Naive thymus-derived CD4-positive, alpha-beta T cell (primary cell): ENCODE measurements at regions of chr21 and their contacts with region 1.

Region 1: GRCh38 chr21:37366482-37367316 is at the start of gene DYRK1A:
- DNase-seq: peak; percentile 95 to 99 (median 99)
- ATAC-seq: peak; percentile 91
- H3K4me3 ChIP-seq: peak within 1 kb of the TSS; percentile 75
- H3K4me3 Mint-ChIP-seq: peak within 1 kb of the TSS; percentile 93 to 100 (median 100)
- H3K27ac ChIP-seq: peak within 1 kb of the TSS; percentile 99
- H3K27ac Mint-ChIP-seq: peak within 1 kb of the TSS; percentile 98 to 100 (median 100)
- H3K4me1 ChIP-seq: peaks cover 20 to 33% of the 10 kb centered on the region in 2 donors
- H3K4me1 Mint-ChIP-seq: peaks cover 34 to 53% (median 44%) of the 10 kb centered on the region in 7 donors
- H3K27me3 ChIP-seq: no peaks in the 10 kb centered on the region
- H3K27me3 Mint-ChIP-seq: peaks cover 0 to 5% (median 0%) of the 10 kb centered on the region in 5 donors
- total RNA-seq, gene DYRK1A: 86.0 to 142 (median 125) TPM

Region 2: GRCh38 chr21:36297921-36298594 is 1068.6 kb before region 1 on chr21:
- CTCF ChIA-PET with region 1: no interaction called
- POLR2A ChIA-PET with region 1: no interaction called
- intact Hi-C with region 1: loop called in 1 of 2 experiments (anchors 10 kb)
- DNase-seq: peak; percentile 35 to 89 (median 87)
- ATAC-seq: peak; percentile 99
- H3K4me3 ChIP-seq: peak overlapping the region; percentile 52
- H3K4me3 Mint-ChIP-seq: peak overlapping the region; percentile 71 to 88 (median 84)
- H3K27ac ChIP-seq: peak overlapping the region; percentile 84
- H3K27ac Mint-ChIP-seq: peak overlapping the region; percentile 91 to 100 (median 98)
- H3K4me1 ChIP-seq: peaks cover 21 to 36% of the 10 kb centered on the region in 2 donors
- H3K4me1 Mint-ChIP-seq: peaks cover 24 to 53% (median 40%) of the 10 kb centered on the region in 7 donors
- H3K27me3 ChIP-seq: no peaks in the 10 kb centered on the region
- H3K27me3 Mint-ChIP-seq: no peaks in the 10 kb centered on the region

Region 3: DNA sequence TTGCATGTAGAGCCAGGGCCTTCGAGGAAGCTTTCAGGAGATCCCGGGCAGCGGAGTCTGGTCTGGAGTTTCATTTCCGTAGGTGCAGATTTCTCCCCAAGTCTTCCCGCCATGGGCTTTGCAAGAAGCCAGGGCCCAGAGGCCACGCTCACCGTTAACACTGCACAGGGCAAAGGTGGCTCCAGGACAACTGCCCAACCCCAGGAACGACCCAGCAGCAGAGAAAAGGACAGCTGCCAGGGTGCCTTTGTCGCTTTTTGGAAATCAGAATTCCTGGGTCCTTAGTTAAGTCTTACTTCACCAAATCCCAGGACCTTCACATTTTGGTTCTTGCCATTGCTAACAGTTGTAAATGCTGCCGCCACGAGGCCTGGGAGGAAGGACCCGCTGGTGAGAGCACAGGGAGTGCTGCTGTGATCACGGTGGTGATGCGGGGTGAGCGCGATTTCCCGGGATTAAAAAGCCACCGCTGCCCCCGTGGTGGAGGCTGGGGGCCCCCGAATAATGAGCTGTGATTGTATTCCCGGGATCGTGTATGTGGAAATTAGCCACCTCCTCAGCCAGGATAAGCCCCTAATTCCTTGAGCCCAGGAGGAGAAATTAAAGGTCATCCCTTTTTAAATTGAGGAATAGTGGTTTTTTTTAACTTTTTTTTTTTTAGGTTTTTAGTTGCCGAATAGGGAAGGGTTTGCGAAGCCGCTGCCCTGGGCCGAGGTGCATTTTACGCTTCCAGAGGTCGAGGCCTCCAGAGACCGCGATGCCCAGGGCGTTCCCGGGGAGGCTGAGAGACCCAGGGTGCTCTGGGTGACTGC is 659.5 kb before region 1 on chr21:
- CTCF ChIA-PET with region 1: no interaction called
- POLR2A ChIA-PET with region 1: no interaction called
- intact Hi-C with region 1: no loop called
- DNase-seq: peak in 1 of 9 donors; percentile 18
- ATAC-seq: no peak
- H3K4me3 ChIP-seq: no peak overlapping the region
- H3K4me3 Mint-ChIP-seq: peak overlapping the region in 9 of 10 donors; percentile 51 to 84 (median 72)
- H3K27ac ChIP-seq: no peak overlapping the region
- H3K27ac Mint-ChIP-seq: no peak overlapping the region
- H3K4me1 ChIP-seq: peaks cover 0 to 31% of the 10 kb centered on the region in 2 donors
- H3K4me1 Mint-ChIP-seq: peaks cover 8 to 61% (median 51%) of the 10 kb centered on the region in 7 donors
- H3K27me3 ChIP-seq: peaks cover 0 to 36% of the 10 kb centered on the region in 2 donors
- H3K27me3 Mint-ChIP-seq: peaks cover 71 to 84% (median 80%) of the 10 kb centered on the region in 5 donors

Region 4: DNA sequence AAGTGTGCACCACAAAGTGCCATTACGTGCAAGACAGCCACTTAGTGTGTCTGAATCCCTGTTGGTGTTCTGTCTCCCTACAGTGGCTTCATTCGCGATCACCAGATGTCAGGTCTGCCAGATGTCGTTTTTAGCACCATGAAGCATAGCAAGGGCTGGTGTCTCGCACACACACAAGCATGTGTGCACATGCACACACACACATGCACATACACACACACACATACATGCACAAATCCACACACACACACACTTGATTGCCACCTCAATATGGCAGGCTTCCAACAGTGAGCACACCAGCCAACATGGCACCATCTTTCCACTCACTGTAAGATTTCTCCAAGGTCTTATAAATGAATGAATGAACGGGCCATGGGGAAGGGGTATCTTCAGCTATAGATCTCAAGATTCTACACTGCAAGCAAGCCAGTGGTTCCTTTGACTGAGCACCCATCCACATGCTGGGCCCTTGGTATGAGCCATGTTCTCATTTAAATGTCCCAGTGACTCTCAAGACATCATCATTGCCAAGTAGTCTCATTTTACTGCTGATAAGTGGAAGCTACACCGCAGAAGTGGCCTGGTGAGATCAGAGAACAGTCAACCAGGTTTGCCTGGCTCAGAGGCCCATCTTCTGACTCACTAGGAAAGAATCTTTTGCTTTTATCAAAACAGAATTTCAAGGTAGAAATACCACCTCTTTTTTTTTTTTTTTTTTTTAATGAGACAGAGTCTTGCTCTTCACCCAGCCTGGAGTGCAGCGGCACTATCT is 582.9 kb before region 1 on chr21:
- CTCF ChIA-PET with region 1: no interaction called
- POLR2A ChIA-PET with region 1: no interaction called
- intact Hi-C with region 1: no loop called
- DNase-seq: no peak
- ATAC-seq: no peak
- H3K4me3 ChIP-seq: no peak overlapping the region
- H3K4me3 Mint-ChIP-seq: no peak overlapping the region
- H3K27ac ChIP-seq: no peak overlapping the region
- H3K27ac Mint-ChIP-seq: no peak overlapping the region
- H3K4me1 ChIP-seq: no peaks in the 10 kb centered on the region
- H3K4me1 Mint-ChIP-seq: peaks cover 0 to 7% (median 0%) of the 10 kb centered on the region in 7 donors
- H3K27me3 ChIP-seq: no peaks in the 10 kb centered on the region
- H3K27me3 Mint-ChIP-seq: no peaks in the 10 kb centered on the region

Region 5: GRCh38 chr21:37072988-37073416 is 293.7 kb before region 1 on chr21 and contains the starts of genes PIGP and TTC3:
- CTCF ChIA-PET with region 1: no interaction called
- POLR2A ChIA-PET with region 1: no interaction called
- intact Hi-C with region 1: loop called (anchors 1 kb)
- DNase-seq: peak; percentile 93 to 99 (median 97)
- ATAC-seq: peak; percentile 79
- H3K4me3 ChIP-seq: peak within 1 kb of the TSS; percentile 76
- H3K4me3 Mint-ChIP-seq: peak within 1 kb of the TSS; percentile 88 to 100 (median 98)
- H3K27ac ChIP-seq: peak within 1 kb of the TSS; percentile 97
- H3K27ac Mint-ChIP-seq: peak within 1 kb of the TSS; percentile 91 to 100 (median 97)
- H3K4me1 ChIP-seq: peaks cover 22 to 23% of the 10 kb centered on the region in 2 donors
- H3K4me1 Mint-ChIP-seq: peaks cover 30 to 66% (median 59%) of the 10 kb centered on the region in 7 donors
- H3K27me3 ChIP-seq: no peaks in the 10 kb centered on the region
- H3K27me3 Mint-ChIP-seq: peaks cover 0 to 6% (median 0%) of the 10 kb centered on the region in 5 donors
- total RNA-seq, gene PIGP: 9.1 to 26.7 (median 15.3) TPM
- total RNA-seq, gene TTC3: 66.6 to 208 (median 154) TPM

Region 6: GRCh38 chr21:37257967-37258877 is 108.5 kb before region 1 on chr21:
- CTCF ChIA-PET with region 1: no interaction called
- POLR2A ChIA-PET with region 1: interaction called, 4 read pairs
- intact Hi-C with region 1: loop called in 1 of 2 experiments (anchors 2 kb)
- DNase-seq: peak; percentile 58 to 87 (median 82)
- ATAC-seq: peak; percentile 76
- H3K4me3 ChIP-seq: peak overlapping the region; percentile 75
- H3K4me3 Mint-ChIP-seq: peak overlapping the region; percentile 79 to 92 (median 88)
- H3K27ac ChIP-seq: peak overlapping the region; percentile 79
- H3K27ac Mint-ChIP-seq: peak overlapping the region; percentile 58 to 98 (median 85)
- H3K4me1 ChIP-seq: peaks cover 15 to 17% of the 10 kb centered on the region in 2 donors
- H3K4me1 Mint-ChIP-seq: peaks cover 32 to 59% (median 53%) of the 10 kb centered on the region in 7 donors
- H3K27me3 ChIP-seq: no peaks in the 10 kb centered on the region
- H3K27me3 Mint-ChIP-seq: no peaks in the 10 kb centered on the region

Region 7: DNA sequence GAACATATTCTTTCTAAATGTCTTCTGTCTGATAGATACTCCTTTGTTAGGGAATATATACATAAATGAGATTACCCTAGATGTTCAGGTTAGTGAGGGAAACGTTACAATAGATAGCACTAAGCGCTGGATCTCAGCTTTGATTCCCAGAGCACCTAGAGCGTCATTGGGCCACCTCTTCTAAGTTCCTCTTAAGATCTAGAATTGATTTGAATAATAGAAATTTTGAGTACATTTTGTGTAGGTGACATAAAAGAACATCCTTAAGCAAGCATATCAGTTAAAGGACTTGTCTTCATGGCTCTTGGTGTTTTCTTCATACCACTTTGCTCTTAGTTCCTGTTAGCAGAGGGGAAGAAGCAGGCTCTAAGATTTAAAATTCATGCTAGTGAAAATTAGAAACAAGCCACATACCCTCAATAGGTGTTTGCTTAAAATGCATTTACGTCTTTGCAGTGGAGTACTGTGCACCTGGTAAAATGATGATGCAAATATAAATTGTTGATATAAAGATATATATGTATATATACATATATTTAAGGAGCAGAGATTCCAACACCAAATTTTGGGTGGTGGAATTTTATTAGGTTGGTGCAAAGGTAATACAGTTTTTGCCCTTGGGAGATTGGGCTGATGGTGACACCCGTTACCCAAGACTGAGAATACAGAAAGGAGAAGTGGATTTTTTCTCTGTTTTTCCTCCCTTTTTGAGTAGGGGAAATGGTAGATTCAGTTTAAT is 47.0 kb after region 1 on chr21:
- CTCF ChIA-PET with region 1: no interaction called
- POLR2A ChIA-PET with region 1: interaction called, 3 read pairs
- intact Hi-C with region 1: loop called (anchors 5 kb)
- DNase-seq: no peak
- ATAC-seq: no peak
- H3K4me3 ChIP-seq: no peak overlapping the region
- H3K4me3 Mint-ChIP-seq: peak overlapping the region in 6 of 10 donors; percentile 0 to 64 (median 46)
- H3K27ac ChIP-seq: peak overlapping the region; percentile 23
- H3K27ac Mint-ChIP-seq: peak overlapping the region in 6 of 9 donors; percentile 23 to 79 (median 42)
- H3K4me1 ChIP-seq: peaks cover 32 to 59% of the 10 kb centered on the region in 2 donors
- H3K4me1 Mint-ChIP-seq: peaks cover 51 to 95% (median 91%) of the 10 kb centered on the region in 7 donors
- H3K27me3 ChIP-seq: no peaks in the 10 kb centered on the region
- H3K27me3 Mint-ChIP-seq: no peaks in the 10 kb centered on the region

Region 8: GRCh38 chr21:37546949-37547614 is 180.4 kb after region 1 on chr21:
- CTCF ChIA-PET with region 1: no interaction called
- POLR2A ChIA-PET with region 1: no interaction called
- intact Hi-C with region 1: no loop called
- DNase-seq: peak in 3 of 9 donors; percentile 3 to 5 (median 3)
- ATAC-seq: no peak
- H3K4me3 ChIP-seq: no peak overlapping the region
- H3K4me3 Mint-ChIP-seq: peak overlapping the region in 8 of 10 donors; percentile 4 to 64 (median 44)
- H3K27ac ChIP-seq: no peak overlapping the region
- H3K27ac Mint-ChIP-seq: no peak overlapping the region
- H3K4me1 ChIP-seq: peaks cover 0 to 4% of the 10 kb centered on the region in 2 donors
- H3K4me1 Mint-ChIP-seq: peaks cover 14 to 30% (median 21%) of the 10 kb centered on the region in 7 donors
- H3K27me3 ChIP-seq: no peaks in the 10 kb centered on the region
- H3K27me3 Mint-ChIP-seq: peaks cover 17 to 55% (median 40%) of the 10 kb centered on the region in 5 donors

Region 9: GRCh38 chr21:39183237-39184007 is 1816.7 kb after region 1 on chr21 and contains the start of gene PSMG1:
- CTCF ChIA-PET with region 1: no interaction called
- POLR2A ChIA-PET with region 1: no interaction called
- intact Hi-C with region 1: loop called (anchors 5 to 10 kb)
- DNase-seq: peak; percentile 89 to 96 (median 94)
- ATAC-seq: peak; percentile 99
- H3K4me3 ChIP-seq: peak within 1 kb of the TSS; percentile 86
- H3K4me3 Mint-ChIP-seq: peak within 1 kb of the TSS; percentile 92 to 100 (median 97)
- H3K27ac ChIP-seq: peak within 1 kb of the TSS; percentile 93
- H3K27ac Mint-ChIP-seq: peak within 1 kb of the TSS; percentile 88 to 98 (median 95)
- H3K4me1 ChIP-seq: peaks cover 9% of the 10 kb centered on the region in 2 donors
- H3K4me1 Mint-ChIP-seq: peaks cover 28 to 78% (median 52%) of the 10 kb centered on the region in 7 donors
- H3K27me3 ChIP-seq: no peaks in the 10 kb centered on the region
- H3K27me3 Mint-ChIP-seq: no peaks in the 10 kb centered on the region
- total RNA-seq, gene PSMG1: 9.8 to 62.5 (median 16.9) TPM